ENCODE measurements at regions of chr6 and their contacts with region 1.

Region 1: GRCh38 chr6:137076277-137077068 is 31.7 kb upstream of the IL20RA start:
- DNase-seq: peak; percentile 80 to 83
- H3K4me3 ChIP-seq: no peak overlapping the region
- H3K4me3 Mint-ChIP-seq: no peak overlapping the region
- H3K27ac Mint-ChIP-seq: no peak overlapping the region
- H3K4me1 ChIP-seq: no peaks in the 10 kb centered on the region
- H3K4me1 Mint-ChIP-seq: no peaks in the 10 kb centered on the region
- H3K27me3 ChIP-seq: no peaks in the 10 kb centered on the region
- H3K27me3 Mint-ChIP-seq: peaks cover 6% of the 10 kb centered on the region
- CTCF ChIP-seq: peak; percentile 68 to 85

Region 2: GRCh38 chr6:137155830-137156229 is 79.4 kb after region 1 on chr6:
- CTCF ChIA-PET with region 1: no interaction called
- POLR2A ChIA-PET with region 1: no interaction called
- intact Hi-C with region 1: no loop called
- DNase-seq: no peak
- H3K4me3 ChIP-seq: no peak overlapping the region
- H3K4me3 Mint-ChIP-seq: no peak overlapping the region
- H3K27ac Mint-ChIP-seq: no peak overlapping the region
- H3K4me1 ChIP-seq: peaks cover 2% of the 10 kb centered on the region; the same call in 1 of the 2 replicates
- H3K4me1 Mint-ChIP-seq: no peaks in the 10 kb centered on the region
- H3K27me3 ChIP-seq: no peaks in the 10 kb centered on the region
- H3K27me3 Mint-ChIP-seq: peaks cover 4% of the 10 kb centered on the region
- CTCF ChIP-seq: no peak

Region 3: GRCh38 chr6:137641474-137642077 is 565.1 kb after region 1 on chr6:
- CTCF ChIA-PET with region 1: no interaction called
- POLR2A ChIA-PET with region 1: no interaction called
- intact Hi-C with region 1: loop called (anchors 1 kb)
- DNase-seq: peak; percentile 67 to 69
- H3K4me3 ChIP-seq: no peak overlapping the region
- H3K4me3 Mint-ChIP-seq: no peak overlapping the region
- H3K27ac Mint-ChIP-seq: no peak overlapping the region
- H3K4me1 ChIP-seq: peaks cover 20% of the 10 kb centered on the region
- H3K4me1 Mint-ChIP-seq: peaks cover 4% of the 10 kb centered on the region
- H3K27me3 ChIP-seq: no peaks in the 10 kb centered on the region
- H3K27me3 Mint-ChIP-seq: no peaks in the 10 kb centered on the region
- CTCF ChIP-seq: peak; percentile 65 to 74